CD8-positive, alpha-beta T cell (primary cell): ENCODE measurements at regions of chr7 and their contacts with region 1.

Region 1: GRCh38 chr7:143380255-143380645 is 895 bp upstream of the ZYX start:
- DNase-seq: peak; percentile 82 to 94 (median 89)
- ATAC-seq: peak; percentile 42
- H3K4me3 ChIP-seq: peak overlapping the region; percentile 96 to 99
- H3K4me3 Mint-ChIP-seq: peak overlapping the region; percentile 90
- H3K27ac ChIP-seq: peak overlapping the region; percentile 84 to 95
- H3K27ac Mint-ChIP-seq: peak overlapping the region; percentile 94
- H3K4me1 ChIP-seq: peaks cover 81% of the 10 kb centered on the region
- H3K4me1 Mint-ChIP-seq: peaks cover 40% of the 10 kb centered on the region
- H3K27me3 ChIP-seq: no peaks in the 10 kb centered on the region
- H3K27me3 Mint-ChIP-seq: no peaks in the 10 kb centered on the region
- CTCF ChIP-seq: peak; percentile 61

Region 2: GRCh38 chr7:143248761-143249354 is 131.4 kb before region 1 on chr7:
- CTCF ChIA-PET with region 1: interaction called, 8 read pairs
- POLR2A ChIA-PET with region 1: interaction called, 10 read pairs
- intact Hi-C with region 1: loop called (anchors 5 to 10 kb)
- DNase-seq: no peak
- ATAC-seq: no peak
- H3K4me3 ChIP-seq: no peak overlapping the region
- H3K4me3 Mint-ChIP-seq: no peak overlapping the region
- H3K27ac ChIP-seq: no peak overlapping the region
- H3K27ac Mint-ChIP-seq: peak overlapping the region; percentile 73
- H3K4me1 ChIP-seq: peaks cover 60% of the 10 kb centered on the region
- H3K4me1 Mint-ChIP-seq: peaks cover 79% of the 10 kb centered on the region
- H3K27me3 ChIP-seq: no peaks in the 10 kb centered on the region
- H3K27me3 Mint-ChIP-seq: no peaks in the 10 kb centered on the region
- CTCF ChIP-seq: no peak

Region 3: DNA sequence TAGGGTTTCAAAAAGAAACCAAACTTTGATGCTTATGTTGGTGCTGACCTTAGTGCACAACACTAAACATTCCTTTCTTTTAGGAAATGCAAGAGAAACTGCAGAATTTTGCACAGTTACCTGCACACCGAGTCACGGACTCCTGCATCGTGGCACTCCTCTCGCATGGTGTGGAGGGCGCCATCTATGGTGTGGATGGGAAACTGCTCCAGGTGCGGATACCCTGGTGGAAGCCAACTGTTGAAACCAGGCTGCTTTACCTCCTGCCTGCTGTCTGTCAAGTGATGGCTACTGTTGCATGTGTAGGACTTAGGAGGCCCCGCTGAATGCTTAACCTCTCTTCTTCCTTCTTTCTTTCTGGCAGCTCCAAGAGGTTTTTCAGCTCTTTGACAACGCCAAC is 80.4 kb before region 1 on chr7:
- CTCF ChIA-PET with region 1: interaction called, 24 read pairs
- POLR2A ChIA-PET with region 1: no interaction called
- intact Hi-C with region 1: loop called in 1 of 2 experiments (anchors 5 kb)
- DNase-seq: peak; percentile 42 to 76 (median 69)
- ATAC-seq: peak; percentile 100
- H3K4me3 ChIP-seq: no peak overlapping the region
- H3K4me3 Mint-ChIP-seq: no peak overlapping the region
- H3K27ac ChIP-seq: no peak overlapping the region
- H3K27ac Mint-ChIP-seq: no peak overlapping the region
- H3K4me1 ChIP-seq: peaks cover 9% of the 10 kb centered on the region
- H3K4me1 Mint-ChIP-seq: peaks cover 31% of the 10 kb centered on the region
- H3K27me3 ChIP-seq: no peaks in the 10 kb centered on the region
- H3K27me3 Mint-ChIP-seq: no peaks in the 10 kb centered on the region
- CTCF ChIP-seq: peak; percentile 80

Region 4: GRCh38 chr7:143362131-143363015 is 17.9 kb before region 1 on chr7 and contains the start of gene FAM131B:
- CTCF ChIA-PET with region 1: interaction called, 10 read pairs
- POLR2A ChIA-PET with region 1: interaction called, 7 read pairs
- intact Hi-C with region 1: loop called (anchors 2 kb)
- DNase-seq: peak in 5 of 9 experiments; percentile 41 to 74 (median 64)
- ATAC-seq: peak; percentile 82
- H3K4me3 ChIP-seq: peak within 1 kb of the TSS; percentile 60 to 71
- H3K4me3 Mint-ChIP-seq: peak within 1 kb of the TSS; percentile 89
- H3K27ac ChIP-seq: no peak within 1 kb of the TSS
- H3K27ac Mint-ChIP-seq: peak within 1 kb of the TSS; percentile 45
- H3K4me1 ChIP-seq: peaks cover 4% of the 10 kb centered on the region
- H3K4me1 Mint-ChIP-seq: peaks cover 5% of the 10 kb centered on the region
- H3K27me3 ChIP-seq: no peaks in the 10 kb centered on the region
- H3K27me3 Mint-ChIP-seq: peaks cover 9% of the 10 kb centered on the region
- CTCF ChIP-seq: no peak
- total RNA-seq, gene FAM131B: 0.30 to 0.36 TPM

Region 5: GRCh38 chr7:143901668-143902331 is 521.5 kb after region 1 on chr7 and contains the start of gene TCAF1:
- CTCF ChIA-PET with region 1: no interaction called
- POLR2A ChIA-PET with region 1: no interaction called
- intact Hi-C with region 1: loop called in 1 of 2 experiments (anchors 10 kb)
- DNase-seq: peak; percentile 70 to 94 (median 88)
- ATAC-seq: peak; percentile 92
- H3K4me3 ChIP-seq: peak within 1 kb of the TSS; percentile 83 to 92
- H3K4me3 Mint-ChIP-seq: peak within 1 kb of the TSS; percentile 90
- H3K27ac ChIP-seq: peak within 1 kb of the TSS; percentile 65 to 67
- H3K27ac Mint-ChIP-seq: peak within 1 kb of the TSS; percentile 94
- H3K4me1 ChIP-seq: peaks cover 19% of the 10 kb centered on the region
- H3K4me1 Mint-ChIP-seq: peaks cover 45% of the 10 kb centered on the region
- H3K27me3 ChIP-seq: no peaks in the 10 kb centered on the region
- H3K27me3 Mint-ChIP-seq: no peaks in the 10 kb centered on the region
- CTCF ChIP-seq: no peak
- total RNA-seq, gene TCAF1: 4.8 to 5.0 TPM